AG04450 (cell line): ENCODE measurements at regions of chr22 and their contacts with region 1.

Region 1: DNA sequence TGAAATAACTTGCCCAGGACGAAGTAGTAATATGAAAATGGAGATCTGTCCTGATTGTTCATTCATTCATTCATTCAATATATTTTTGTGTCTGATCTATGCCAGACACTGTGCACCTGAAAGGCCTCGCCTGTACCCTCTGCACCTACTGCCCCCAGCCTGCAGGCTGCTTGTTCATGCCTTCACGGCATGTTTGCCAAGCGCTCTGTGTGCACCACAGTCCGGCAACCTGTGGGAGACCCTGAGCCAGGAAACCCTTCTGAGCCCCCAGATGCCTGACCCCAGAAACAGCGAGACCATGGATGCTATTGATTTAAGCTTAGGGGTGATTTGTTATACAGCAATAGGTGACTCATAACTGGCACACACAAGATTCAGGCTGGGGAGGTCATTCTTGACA is 47.0 kb downstream of the RTL6 start:
- DNase-seq: no peak
- H3K4me3 ChIP-seq: no peak overlapping the region
- H3K27ac ChIP-seq: no peak overlapping the region
- H3K27me3 ChIP-seq: no peaks in the 10 kb centered on the region
- CTCF ChIP-seq: no peak

Region 2: DNA sequence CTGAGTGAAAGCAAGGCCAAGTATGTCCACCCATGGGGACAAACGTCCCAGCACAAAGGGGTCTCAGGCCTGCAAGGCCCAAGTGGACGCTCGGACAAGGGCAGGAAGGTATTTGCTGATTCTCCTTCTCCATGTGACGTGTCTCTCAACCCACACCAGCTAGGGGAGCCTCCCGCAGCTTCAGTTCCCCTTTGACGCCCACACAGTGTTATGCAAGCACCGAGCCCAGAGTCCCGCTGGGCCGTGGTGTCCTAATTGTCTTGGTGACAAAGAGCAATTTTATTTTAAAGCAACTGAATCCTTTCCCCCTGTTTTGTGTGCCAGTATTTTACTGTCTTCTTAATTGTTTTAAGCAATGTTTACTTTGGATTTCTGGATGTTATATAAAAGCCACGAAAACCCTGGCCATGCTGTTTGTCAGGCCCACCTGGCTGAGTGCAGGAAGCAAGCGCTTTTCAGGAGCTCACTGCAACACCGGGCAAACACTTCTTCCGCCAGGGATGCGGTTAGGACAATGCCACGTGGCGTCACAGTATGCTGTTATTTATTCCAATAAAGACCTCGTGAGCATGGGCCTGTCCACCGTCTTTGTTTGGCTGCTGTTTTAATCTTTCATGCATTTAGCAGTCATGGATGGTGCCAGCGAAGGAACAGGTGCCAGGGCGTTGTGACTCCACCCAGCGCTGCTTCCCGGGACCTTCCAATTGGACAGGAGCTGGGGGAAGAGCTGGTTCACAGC is 278.5 kb before region 1 on chr22:
- CTCF ChIA-PET with region 1: no interaction called
- POLR2A ChIA-PET with region 1: no interaction called
- DNase-seq: no peak
- H3K4me3 ChIP-seq: no peak overlapping the region
- H3K27ac ChIP-seq: no peak overlapping the region
- H3K27me3 ChIP-seq: no peaks in the 10 kb centered on the region
- CTCF ChIP-seq: no peak

Region 3: GRCh38 chr22:44489817-44490216 is 38.8 kb after region 1 on chr22:
- CTCF ChIA-PET with region 1: no interaction called
- POLR2A ChIA-PET with region 1: interaction called, 10 read pairs
- DNase-seq: no peak
- H3K4me3 ChIP-seq: no peak overlapping the region
- H3K27ac ChIP-seq: no peak overlapping the region
- H3K27me3 ChIP-seq: no peaks in the 10 kb centered on the region
- CTCF ChIP-seq: no peak

Region 4: DNA sequence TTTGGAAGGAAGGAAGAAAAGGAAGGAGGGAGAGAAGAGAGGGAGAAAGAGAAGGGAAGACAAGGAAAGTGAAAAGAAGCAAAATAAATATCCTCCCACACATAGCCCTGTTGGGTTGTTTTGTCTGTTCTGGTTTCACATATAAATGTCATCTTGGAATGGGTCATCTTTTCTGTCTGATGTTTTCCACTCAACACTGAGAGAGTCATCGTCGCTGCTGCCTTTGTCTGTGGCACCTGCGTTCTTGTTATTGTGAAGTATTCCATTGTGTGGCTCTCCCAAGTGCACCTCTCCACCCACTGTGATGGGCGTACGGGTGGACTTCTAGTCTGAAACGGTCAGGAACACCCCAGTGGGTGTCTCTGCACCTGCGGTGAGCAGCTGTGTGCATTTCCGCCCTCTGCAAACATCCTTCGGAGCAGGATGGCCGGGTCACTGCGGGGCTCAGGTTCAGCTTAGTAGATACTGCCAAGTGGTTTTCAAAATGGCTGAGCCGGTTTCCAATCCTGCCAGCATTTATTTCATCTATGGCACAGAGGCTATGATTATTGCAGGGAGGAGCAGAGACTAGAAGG is 81.5 kb after region 1 on chr22:
- CTCF ChIA-PET with region 1: no interaction called
- POLR2A ChIA-PET with region 1: no interaction called
- DNase-seq: no peak
- H3K4me3 ChIP-seq: no peak overlapping the region
- H3K27ac ChIP-seq: no peak overlapping the region
- H3K27me3 ChIP-seq: peaks cover 3% of the 10 kb centered on the region
- CTCF ChIP-seq: no peak